ENCODE measurements at regions of chr19 and their contacts with region 1.

Region 1: DNA sequence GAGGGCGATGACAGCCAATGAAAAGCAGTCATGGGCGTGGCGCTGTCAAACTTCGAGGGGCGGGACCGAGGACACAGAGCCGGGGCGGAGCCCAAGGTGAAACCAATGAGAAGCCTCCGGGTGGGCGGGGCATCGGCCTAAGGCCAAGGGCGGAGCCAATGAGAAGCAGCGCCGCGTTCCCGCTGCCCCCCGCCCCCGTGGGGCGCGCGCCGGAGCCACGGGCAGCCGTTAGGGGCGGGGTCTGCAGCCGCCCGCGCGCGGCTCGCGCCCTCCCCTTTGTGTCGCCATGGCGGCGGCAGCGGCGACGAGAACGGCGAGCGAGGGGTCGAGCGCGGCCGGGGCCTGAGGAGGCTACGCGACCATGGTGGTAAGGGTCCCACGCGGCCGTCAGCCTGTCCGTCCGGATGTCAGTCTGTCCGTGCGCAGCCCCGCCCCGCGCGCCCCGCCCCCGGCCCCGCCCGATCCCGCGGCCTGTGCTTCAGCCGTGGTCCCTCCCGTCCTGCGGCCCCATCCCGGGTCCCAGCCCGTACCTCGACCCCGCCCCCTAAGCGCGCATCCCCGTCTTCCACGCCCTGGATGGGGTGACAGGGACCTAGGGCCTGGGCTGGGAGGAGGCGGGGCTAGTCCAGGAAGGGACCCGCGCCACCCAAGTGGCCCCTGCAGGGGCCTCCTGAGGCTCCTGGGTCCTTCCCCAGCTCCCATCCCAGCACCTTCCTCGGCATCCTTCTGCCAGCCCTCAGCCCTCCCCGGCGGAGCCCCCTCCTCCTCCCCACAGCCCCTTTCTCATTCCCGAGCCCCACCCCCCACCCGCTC is at the start of gene ARHGAP33:
- DNase-seq: peak; percentile 100
- H3K4me3 Mint-ChIP-seq: peak within 1 kb of the TSS; percentile 78
- H3K27ac Mint-ChIP-seq: no peak within 1 kb of the TSS
- H3K4me1 Mint-ChIP-seq: peaks cover 18% of the 10 kb centered on the region
- H3K27me3 Mint-ChIP-seq: no peaks in the 10 kb centered on the region
- total RNA-seq, gene ARHGAP33: 49.5 to 61.6 TPM

Region 2: GRCh38 chr19:35710784-35711723 is 64.5 kb before region 1 on chr19:
- CTCF ChIA-PET with region 1: no interaction called
- intact Hi-C with region 1: loop called (anchors 1 kb)
- DNase-seq: peak; percentile 87
- H3K4me3 Mint-ChIP-seq: peak overlapping the region; percentile 52
- H3K27ac Mint-ChIP-seq: peak overlapping the region; percentile 100
- H3K4me1 Mint-ChIP-seq: peaks cover 44% of the 10 kb centered on the region
- H3K27me3 Mint-ChIP-seq: no peaks in the 10 kb centered on the region

Region 3: GRCh38 chr19:35757749-35758608 is 17.5 kb before region 1 on chr19 and contains the start of gene PROSER3:
- CTCF ChIA-PET with region 1: no interaction called
- intact Hi-C with region 1: loop called (anchors 1 kb)
- DNase-seq: peak; percentile 99
- H3K4me3 Mint-ChIP-seq: peak within 1 kb of the TSS; percentile 90
- H3K27ac Mint-ChIP-seq: peak within 1 kb of the TSS; percentile 92
- H3K4me1 Mint-ChIP-seq: peaks cover 20% of the 10 kb centered on the region
- H3K27me3 Mint-ChIP-seq: peaks cover 8% of the 10 kb centered on the region
- total RNA-seq, gene PROSER3: 45.3 to 47.4 TPM